OCI-LY7 (cell line): ENCODE measurements at regions of chrX and their contacts with region 1.

Region 1: GRCh38 chrX:13734278-13735172 is at the starts of genes OFD1 and TRAPPC2:
- DNase-seq: peak; percentile 97
- H3K4me3 ChIP-seq: peak within 1 kb of the TSS; percentile 85
- H3K27ac ChIP-seq: peak within 1 kb of the TSS; percentile 99
- H3K4me1 ChIP-seq: peaks cover 36% of the 10 kb centered on the region
- CTCF ChIP-seq: no peak; the same call in 1 of the 2 replicates
- total RNA-seq, gene OFD1: 60.7 and 71.0 TPM in 2 replicates
- total RNA-seq, gene TRAPPC2: 16.4 and 22.2 TPM in 2 replicates

Region 2: DNA sequence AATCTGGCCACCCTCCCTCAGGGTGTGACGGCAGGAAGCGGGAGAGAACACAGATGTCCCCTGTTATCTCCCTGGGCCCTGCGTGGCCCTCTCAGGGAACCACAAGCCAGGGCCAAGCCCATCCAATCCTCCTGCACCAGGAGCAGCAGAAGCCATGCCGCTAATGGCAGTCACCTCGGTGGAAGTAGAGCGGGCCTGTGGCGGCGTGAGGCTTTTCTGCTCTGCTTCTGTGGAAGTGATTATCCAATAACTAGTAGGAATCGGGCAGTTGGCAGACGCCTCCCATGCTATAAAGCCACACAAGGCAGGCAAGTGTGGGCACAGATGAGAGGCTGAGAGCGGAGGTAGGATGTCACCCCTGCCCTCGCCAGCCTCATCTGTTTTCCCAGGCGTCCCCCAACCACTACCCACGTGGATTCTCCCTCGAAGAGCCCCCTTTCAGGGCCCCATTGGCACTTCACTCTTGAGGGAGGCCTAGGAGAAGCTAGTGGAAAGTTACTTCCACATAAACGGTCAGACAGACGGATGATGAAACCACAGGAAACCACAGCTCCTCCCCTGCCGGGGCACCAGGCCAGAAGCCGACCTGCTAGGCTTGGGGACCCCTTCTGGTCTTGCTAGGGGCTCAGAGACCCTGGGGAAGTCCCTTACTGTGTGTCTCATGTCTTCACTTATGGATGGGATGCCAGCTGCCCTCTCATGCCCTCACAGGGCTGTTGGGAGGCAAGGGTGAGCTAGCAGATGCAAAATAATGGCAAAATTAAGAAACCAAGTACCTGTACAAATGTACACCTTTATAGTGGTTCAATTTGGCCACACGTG is 778.4 kb before region 1 on chrX:
- CTCF ChIA-PET with region 1: no interaction called
- POLR2A ChIA-PET with region 1: no interaction called
- intact Hi-C with region 1: loop called (anchors 5 kb)
- DNase-seq: peak; percentile 88
- H3K4me3 ChIP-seq: peak overlapping the region; percentile 63
- H3K27ac ChIP-seq: peak overlapping the region; percentile 100
- H3K4me1 ChIP-seq: peaks cover 85% of the 10 kb centered on the region
- CTCF ChIP-seq: no peak

Region 3: DNA sequence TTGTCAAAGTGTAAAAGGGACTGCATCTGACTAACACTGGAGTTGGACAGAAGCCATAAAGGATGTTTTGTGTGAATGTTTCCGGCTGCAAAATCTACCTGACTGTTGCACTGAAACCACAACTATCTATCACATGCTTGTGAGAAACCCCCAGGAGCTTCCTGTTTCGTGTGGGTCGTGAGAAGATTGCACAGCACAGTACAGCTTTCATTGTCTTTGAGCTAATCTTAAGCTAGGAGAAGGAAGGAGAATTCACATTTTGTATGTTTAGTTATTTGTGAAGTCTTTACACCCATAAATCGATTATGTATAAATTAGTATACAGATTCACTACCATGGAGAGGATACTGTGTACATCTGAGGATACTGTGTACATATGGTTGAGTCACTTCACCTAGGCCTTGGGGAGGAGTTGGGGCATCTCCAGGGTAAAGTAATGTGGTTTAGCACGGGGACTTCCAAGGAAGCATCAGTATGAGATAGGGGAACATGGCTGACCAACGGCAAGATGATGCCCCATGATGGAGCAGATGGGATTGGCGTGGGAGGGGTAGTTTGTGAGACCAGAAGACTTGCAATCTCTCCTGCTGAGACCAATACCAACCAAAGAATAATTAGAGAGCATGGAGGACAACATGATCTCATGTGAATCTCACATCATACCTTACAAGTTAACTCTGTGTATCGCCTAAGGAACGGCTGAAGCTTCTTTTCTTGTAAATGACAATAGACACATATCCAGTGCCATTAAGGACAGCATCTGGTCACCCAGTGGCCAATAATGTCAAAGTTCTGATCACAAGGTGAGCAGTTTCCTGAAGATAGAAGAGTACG is 647.0 kb before region 1 on chrX:
- CTCF ChIA-PET with region 1: no interaction called
- POLR2A ChIA-PET with region 1: no interaction called
- intact Hi-C with region 1: loop called (anchors 10 kb)
- DNase-seq: peak; percentile 89
- H3K4me3 ChIP-seq: peak overlapping the region; percentile 44
- H3K27ac ChIP-seq: peak overlapping the region; percentile 98
- H3K4me1 ChIP-seq: peaks cover 94% of the 10 kb centered on the region
- CTCF ChIP-seq: no peak

Region 4: GRCh38 chrX:13699183-13699826 is 35.2 kb before region 1 on chrX:
- CTCF ChIA-PET with region 1: interaction called, 3 read pairs
- POLR2A ChIA-PET with region 1: interaction called, 30 read pairs
- intact Hi-C with region 1: loop called (anchors 5 kb)
- DNase-seq: no peak
- H3K4me3 ChIP-seq: peak overlapping the region; percentile 16
- H3K27ac ChIP-seq: no peak overlapping the region
- H3K4me1 ChIP-seq: peaks cover 44% of the 10 kb centered on the region
- CTCF ChIP-seq: no peak

Region 5: DNA sequence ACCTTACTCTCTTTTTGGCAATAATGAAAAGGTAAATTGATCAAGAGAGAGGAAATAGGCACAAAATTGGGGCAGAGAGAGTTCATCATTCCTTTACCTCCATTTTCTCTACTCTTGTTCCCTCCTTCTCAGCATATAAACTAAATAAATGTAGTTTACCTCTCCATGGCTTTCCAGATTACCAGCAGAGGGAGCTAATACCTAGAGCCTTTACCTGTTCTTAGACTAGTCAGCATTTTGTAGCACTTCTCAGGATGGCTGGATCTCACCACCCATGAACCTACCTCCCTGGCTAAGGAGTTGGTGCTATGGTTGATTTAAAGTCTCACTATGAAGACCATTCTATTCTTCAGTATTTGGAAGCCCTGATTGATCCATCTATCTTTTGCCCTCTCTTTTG is 15.7 kb after region 1 on chrX:
- CTCF ChIA-PET with region 1: interaction called, 3 read pairs
- POLR2A ChIA-PET with region 1: interaction called, 52 read pairs
- intact Hi-C with region 1: no loop called
- DNase-seq: peak; percentile 64
- H3K4me3 ChIP-seq: no peak overlapping the region
- H3K27ac ChIP-seq: peak overlapping the region; percentile 57
- H3K4me1 ChIP-seq: peaks cover 51% of the 10 kb centered on the region
- CTCF ChIP-seq: peak; percentile 79

Region 6: GRCh38 chrX:14029425-14030173 is 295.1 kb after region 1 on chrX and contains the start of gene GEMIN8:
- CTCF ChIA-PET with region 1: no interaction called
- POLR2A ChIA-PET with region 1: interaction called, 14 read pairs
- intact Hi-C with region 1: loop called (anchors 5 kb)
- DNase-seq: peak; percentile 88
- H3K4me3 ChIP-seq: peak within 1 kb of the TSS; percentile 90
- H3K27ac ChIP-seq: peak within 1 kb of the TSS; percentile 74
- H3K4me1 ChIP-seq: peaks cover 36% of the 10 kb centered on the region
- CTCF ChIP-seq: no peak
- total RNA-seq, gene GEMIN8: 23.2 and 30.1 TPM in 2 replicates